Dendritic cell treated with granulocyte-macrophage colony-stimulating factor and Interleukin-4, amounts not matched to agents 40 ng/mL and 50 ng/mL, for 4 days (primary cell): ENCODE measurements at regions of chrX and their contacts with region 1.

Region 1: DNA sequence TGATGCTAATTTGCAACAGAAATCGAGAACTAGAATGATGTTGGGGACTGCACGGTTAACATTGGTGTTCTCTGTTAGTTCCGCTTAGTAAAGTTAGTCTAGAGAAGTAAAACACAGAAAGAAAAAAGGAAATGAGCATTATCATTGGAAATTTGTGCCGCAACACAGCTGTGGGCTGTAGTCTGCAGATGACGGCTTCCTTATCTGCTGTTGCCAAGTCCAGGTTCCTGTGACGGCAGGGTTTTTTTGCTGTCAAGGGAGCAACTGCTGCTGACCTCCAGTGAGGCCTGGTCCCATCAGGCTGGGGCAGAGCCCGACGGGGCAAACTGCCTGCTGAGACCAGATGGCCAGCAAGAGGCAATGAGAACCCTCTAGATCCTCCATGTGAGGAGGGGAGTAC is 38.9 kb upstream of the PHEX start:
- H3K4me3 Mint-ChIP-seq: no peak overlapping the region
- H3K27ac Mint-ChIP-seq: peak overlapping the region; percentile 89
- H3K4me1 Mint-ChIP-seq: peaks cover 36% of the 10 kb centered on the region
- H3K27me3 Mint-ChIP-seq: no peaks in the 10 kb centered on the region

Region 2: GRCh38 chrX:22053481-22053880 is 60.2 kb after region 1 on chrX:
- intact Hi-C with region 1: loop called (anchors 10 kb)
- H3K4me3 Mint-ChIP-seq: no peak overlapping the region
- H3K27ac Mint-ChIP-seq: no peak overlapping the region
- H3K4me1 Mint-ChIP-seq: no peaks in the 10 kb centered on the region
- H3K27me3 Mint-ChIP-seq: no peaks in the 10 kb centered on the region